ENCODE measurements at regions of chr20 and their contacts with region 1.

Region 1: DNA sequence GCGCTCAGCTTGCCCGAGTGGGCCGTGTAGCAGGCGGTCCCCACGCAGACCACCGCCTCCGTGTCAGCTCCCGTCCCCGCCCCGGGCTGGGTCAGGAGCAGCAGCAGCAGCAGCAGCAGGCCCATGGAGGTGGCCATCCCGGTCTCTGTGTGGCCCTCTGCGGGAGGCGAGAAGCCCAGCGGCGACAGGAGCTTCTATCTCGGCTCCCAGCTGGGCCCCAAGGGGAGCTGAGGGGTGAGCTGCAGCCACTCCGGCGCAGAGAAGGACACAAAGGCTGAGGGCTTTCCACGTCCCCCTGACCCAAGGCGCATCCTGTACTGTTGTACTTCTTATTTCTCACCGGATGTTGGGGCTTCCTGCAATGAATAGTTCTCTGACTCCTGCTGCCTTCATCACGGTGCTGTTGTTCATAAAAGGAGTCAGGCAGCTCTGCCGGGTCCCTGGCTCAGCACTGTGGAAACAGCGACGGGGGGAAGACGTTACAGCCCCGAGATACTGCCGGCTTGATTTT is at the start of gene CD93:
- DNase-seq: peak in 4 of 5 donors; percentile 11 to 41 (median 31)
- H3K4me3 ChIP-seq: no peak within 1 kb of the TSS
- H3K4me3 Mint-ChIP-seq: peak within 1 kb of the TSS; percentile 79 to 87 (median 82)
- H3K27ac ChIP-seq: no peak within 1 kb of the TSS
- H3K27ac Mint-ChIP-seq: peak within 1 kb of the TSS; percentile 59 to 94 (median 91)
- H3K4me1 ChIP-seq: peaks cover 13% of the 10 kb centered on the region
- H3K4me1 Mint-ChIP-seq: peaks cover 11 to 42% (median 21%) of the 10 kb centered on the region in 4 donors
- H3K27me3 ChIP-seq: no peaks in the 10 kb centered on the region
- H3K27me3 Mint-ChIP-seq: peaks cover 2 to 5% of the 10 kb centered on the region in 2 donors
- total RNA-seq, gene CD93: 1.2 to 1.3 TPM

Region 2: DNA sequence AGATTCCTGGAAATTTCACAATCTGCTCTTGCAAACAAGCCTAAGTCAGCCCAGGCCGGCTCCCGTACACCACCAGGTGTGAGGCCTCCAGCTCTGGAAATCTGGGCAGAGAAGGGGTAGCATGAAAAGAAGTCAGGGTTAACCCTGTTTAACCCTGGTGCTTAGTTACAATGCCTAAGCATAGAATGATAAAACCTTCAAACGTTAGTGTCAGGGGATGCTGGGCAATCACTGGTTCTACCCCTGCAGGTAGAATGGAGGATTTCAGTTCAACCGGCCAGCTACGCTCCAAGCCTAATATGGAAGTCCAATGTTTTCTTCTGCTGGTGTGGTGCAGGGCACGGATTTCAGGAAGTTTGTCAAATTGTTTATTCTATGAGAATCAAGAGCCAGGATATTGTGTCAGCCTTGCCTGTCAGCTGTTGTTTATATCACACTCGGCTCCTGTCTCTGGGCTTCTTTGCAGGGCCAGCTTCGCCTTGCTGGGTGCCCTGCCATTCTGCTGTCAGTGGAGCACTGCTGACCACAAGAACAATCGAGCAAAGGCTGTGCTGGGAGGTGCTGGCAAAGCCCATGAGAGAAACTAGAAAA is 20.2 kb after region 1 on chr20:
- CTCF ChIA-PET with region 1: no interaction called
- POLR2A ChIA-PET with region 1: no interaction called
- intact Hi-C with region 1: no loop called
- DNase-seq: no peak
- H3K4me3 ChIP-seq: no peak overlapping the region
- H3K4me3 Mint-ChIP-seq: no peak overlapping the region
- H3K27ac ChIP-seq: no peak overlapping the region
- H3K27ac Mint-ChIP-seq: no peak overlapping the region
- H3K4me1 ChIP-seq: no peaks in the 10 kb centered on the region
- H3K4me1 Mint-ChIP-seq: no peaks in the 10 kb centered on the region
- H3K27me3 ChIP-seq: no peaks in the 10 kb centered on the region
- H3K27me3 Mint-ChIP-seq: peaks cover 0 to 2% of the 10 kb centered on the region in 2 donors

Region 3: DNA sequence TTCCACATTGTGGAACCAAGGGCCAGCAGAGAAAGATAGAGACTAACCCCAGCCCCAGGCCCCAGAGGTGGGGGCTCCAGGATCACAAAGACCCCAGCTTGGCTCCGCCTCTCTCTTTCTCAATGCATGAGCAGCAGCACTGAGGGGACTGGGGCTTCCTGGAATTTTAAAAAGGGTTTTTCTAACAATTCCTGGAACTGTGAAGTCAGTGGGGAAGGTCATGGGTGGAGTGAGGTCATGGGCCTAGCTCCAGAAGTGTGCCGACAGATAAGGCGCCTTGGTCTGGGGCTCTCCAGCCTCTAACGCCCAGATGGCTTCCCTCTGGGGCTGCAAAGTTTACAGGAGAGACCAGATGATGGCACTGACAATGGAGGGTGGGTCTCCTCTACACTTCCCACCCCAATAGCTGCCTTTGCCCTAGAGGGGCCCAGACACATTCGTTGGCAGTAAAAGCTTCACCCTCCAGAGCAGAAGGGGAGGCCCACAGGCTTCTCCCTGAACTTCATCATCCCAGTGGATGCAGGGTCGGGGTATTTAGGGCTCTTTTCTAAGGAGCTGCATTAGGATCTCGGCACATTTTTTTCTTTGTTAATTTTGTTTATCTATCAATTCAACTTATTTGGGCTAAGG is 46.9 kb after region 1 on chr20:
- CTCF ChIA-PET with region 1: no interaction called
- POLR2A ChIA-PET with region 1: no interaction called
- intact Hi-C with region 1: no loop called
- DNase-seq: no peak
- H3K4me3 ChIP-seq: no peak overlapping the region
- H3K4me3 Mint-ChIP-seq: no peak overlapping the region
- H3K27ac ChIP-seq: no peak overlapping the region
- H3K27ac Mint-ChIP-seq: no peak overlapping the region
- H3K4me1 ChIP-seq: no peaks in the 10 kb centered on the region
- H3K4me1 Mint-ChIP-seq: peaks cover 0 to 5% (median 3%) of the 10 kb centered on the region in 4 donors
- H3K27me3 ChIP-seq: no peaks in the 10 kb centered on the region
- H3K27me3 Mint-ChIP-seq: no peaks in the 10 kb centered on the region

Region 4: DNA sequence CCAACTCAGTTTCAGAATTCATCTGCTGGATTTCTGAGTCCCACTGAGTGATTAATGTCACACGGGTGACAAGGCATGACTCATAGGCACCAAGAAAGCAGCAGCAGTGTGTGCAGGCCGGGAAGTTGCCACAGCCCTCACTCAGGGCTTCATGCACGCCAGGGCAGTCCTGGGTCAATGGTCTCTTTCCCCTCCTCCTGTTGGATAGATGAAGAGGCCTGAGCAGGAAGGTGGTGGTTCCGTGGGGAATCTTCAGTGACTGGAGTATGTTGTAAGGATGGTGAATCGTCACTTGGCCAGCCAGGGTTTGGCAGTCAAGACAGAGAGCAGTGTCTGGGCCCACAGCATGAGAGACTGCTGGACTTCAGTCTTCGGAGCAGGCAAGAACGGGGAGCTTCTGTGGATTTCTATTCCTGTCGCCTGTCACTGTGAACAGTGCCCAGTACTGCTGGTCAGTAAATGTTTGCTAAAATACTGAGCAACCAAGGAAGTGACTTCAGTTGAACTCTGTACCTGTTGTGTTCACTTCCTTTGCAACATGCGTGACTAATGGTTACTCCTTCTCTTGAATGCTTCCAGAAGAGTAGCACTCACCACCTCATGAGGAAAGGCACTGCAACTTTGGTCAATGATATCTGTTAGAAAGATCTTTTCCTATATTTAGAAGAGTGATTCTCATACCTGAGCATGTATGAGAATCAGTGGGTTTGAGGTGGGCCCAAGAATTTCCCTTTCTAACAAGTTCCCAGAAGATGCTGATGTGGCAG is 62.0 kb after region 1 on chr20:
- CTCF ChIA-PET with region 1: no interaction called
- POLR2A ChIA-PET with region 1: no interaction called
- intact Hi-C with region 1: loop called (anchors 10 kb)
- DNase-seq: no peak
- H3K4me3 ChIP-seq: no peak overlapping the region
- H3K4me3 Mint-ChIP-seq: no peak overlapping the region
- H3K27ac ChIP-seq: no peak overlapping the region
- H3K27ac Mint-ChIP-seq: peak overlapping the region in 2 of 7 donors; percentile 26 to 57
- H3K4me1 ChIP-seq: peaks cover 6% of the 10 kb centered on the region
- H3K4me1 Mint-ChIP-seq: peaks cover 5 to 15% (median 10%) of the 10 kb centered on the region in 4 donors
- H3K27me3 ChIP-seq: no peaks in the 10 kb centered on the region
- H3K27me3 Mint-ChIP-seq: peaks cover 1 to 2% of the 10 kb centered on the region in 2 donors